Testis (tissue), 5 donors: ENCODE measurements at regions of chr1 and their contacts with region 1.

Region 1: GRCh38 chr1:109548321-109549267 is at the start of gene GNAI3:
- DNase-seq: peak; percentile 98
- H3K4me3 ChIP-seq: peak within 1 kb of the TSS; percentile 75 to 81
- H3K27ac ChIP-seq: peak within 1 kb of the TSS; percentile 84 to 94
- H3K4me1 ChIP-seq: peaks cover 16% of the 10 kb centered on the region
- H3K27me3 ChIP-seq: no peaks in the 10 kb centered on the region
- CTCF ChIP-seq: peak in 1 of 3 experiments; percentile 18
- POLR2A ChIP-seq: peak; percentile 98
- total RNA-seq, gene GNAI3: 5.8 to 5.9 TPM

Region 2: GRCh38 chr1:109624201-109625010 is 75.8 kb after region 1 on chr1:
- intact Hi-C with region 1: loop called (anchors 5 kb)
- DNase-seq: no peak
- H3K4me3 ChIP-seq: no peak overlapping the region
- H3K27ac ChIP-seq: peak overlapping the region in 1 of 2 donors; percentile 41
- H3K4me1 ChIP-seq: peaks cover 31% of the 10 kb centered on the region
- H3K27me3 ChIP-seq: no peaks in the 10 kb centered on the region
- CTCF ChIP-seq: no peak
- POLR2A ChIP-seq: no peak

Region 3: DNA sequence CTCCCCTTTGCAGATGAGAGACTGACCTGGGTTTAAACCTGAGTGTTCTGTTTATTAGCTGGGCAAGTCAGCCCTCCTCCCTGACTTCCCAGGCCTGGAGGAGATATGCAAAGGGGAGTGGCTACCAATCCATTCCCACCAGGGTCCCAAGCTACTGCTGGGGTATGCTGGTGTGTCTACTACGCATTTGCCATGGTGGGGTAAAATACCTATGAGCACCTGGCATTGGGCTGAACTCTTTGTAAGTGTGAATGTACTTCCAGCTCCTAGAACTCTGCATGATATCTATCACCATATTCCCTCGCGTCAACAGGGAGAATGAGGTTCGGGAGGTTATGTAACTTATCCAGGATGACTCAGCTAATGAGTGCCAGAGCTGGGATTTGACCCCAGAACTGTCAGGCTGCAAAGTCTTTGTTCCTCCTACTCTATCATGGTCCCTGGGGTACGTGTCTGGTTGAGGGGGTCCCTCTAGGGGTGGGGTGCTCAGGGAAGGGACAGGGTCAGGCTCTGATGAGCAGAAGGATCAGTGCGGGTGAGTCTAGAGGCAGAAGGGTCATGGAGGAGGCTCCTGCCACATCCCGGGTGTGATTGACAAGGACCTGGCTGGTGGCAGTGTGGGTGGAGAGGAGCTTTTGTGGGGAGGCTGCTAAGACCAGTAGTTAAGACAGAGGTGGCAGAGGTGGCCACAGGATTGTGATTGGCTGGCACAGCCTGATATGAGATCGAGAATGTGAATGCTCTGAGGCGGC is 87.8 kb after region 1 on chr1:
- intact Hi-C with region 1: loop called (anchors 5 kb)
- DNase-seq: no peak
- H3K4me3 ChIP-seq: no peak overlapping the region
- H3K27ac ChIP-seq: no peak overlapping the region
- H3K4me1 ChIP-seq: peaks cover 31% of the 10 kb centered on the region
- H3K27me3 ChIP-seq: no peaks in the 10 kb centered on the region
- CTCF ChIP-seq: no peak
- POLR2A ChIP-seq: no peak

Region 4: GRCh38 chr1:109655601-109656519 is 107.3 kb after region 1 on chr1 and contains the start of gene GSTM4:
- intact Hi-C with region 1: no loop called
- DNase-seq: peak; percentile 93
- H3K4me3 ChIP-seq: peak within 1 kb of the TSS; percentile 66 to 68
- H3K27ac ChIP-seq: peak within 1 kb of the TSS; percentile 81 to 93
- H3K4me1 ChIP-seq: peaks cover 29% of the 10 kb centered on the region
- H3K27me3 ChIP-seq: no peaks in the 10 kb centered on the region
- CTCF ChIP-seq: peak in 1 of 3 experiments; percentile 9
- POLR2A ChIP-seq: no peak
- total RNA-seq, gene GSTM4: 58.6 to 61.8 TPM

Region 5: DNA sequence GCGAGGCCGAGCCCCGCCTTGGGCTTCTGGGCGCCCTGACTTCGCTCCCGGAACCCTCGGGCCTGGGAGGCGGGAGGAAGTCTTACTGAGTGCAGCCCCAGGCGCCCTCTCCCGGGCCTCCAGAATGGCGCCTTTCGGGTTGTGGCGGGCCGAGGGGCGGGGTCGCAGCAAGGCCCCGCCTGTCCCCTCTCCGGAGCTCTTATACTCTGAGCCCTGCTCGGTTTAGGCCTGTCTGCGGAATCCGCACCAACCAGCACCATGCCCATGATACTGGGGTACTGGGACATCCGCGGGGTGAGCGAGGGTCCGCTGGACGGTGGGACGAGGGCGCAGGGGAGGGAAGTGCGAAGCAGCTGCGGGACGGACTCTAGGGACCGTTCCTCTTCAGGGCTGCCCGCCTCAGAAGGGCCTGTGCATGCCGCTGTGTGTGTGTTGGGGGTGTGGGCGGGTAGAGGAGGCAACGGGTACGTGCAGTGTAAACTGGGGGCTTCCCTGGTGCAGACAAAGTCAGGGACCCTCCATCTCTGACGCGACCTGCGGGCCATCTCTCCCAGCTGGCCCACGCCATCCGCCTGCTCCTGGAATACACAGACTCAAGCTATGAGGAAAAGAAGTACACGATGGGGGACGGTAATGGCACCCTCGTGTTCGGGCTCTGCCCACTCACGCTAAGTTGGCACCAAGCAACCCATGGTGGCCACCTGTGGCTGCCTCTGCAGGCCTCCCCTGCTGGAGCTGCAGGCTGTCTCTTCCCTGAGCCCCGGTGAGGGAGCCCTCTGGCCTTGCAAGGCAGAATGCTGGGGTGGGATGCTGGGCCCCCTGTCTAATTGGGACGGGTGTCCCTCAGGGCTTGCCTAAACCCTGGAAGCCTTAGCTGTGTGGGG is 139.3 kb after region 1 on chr1 and contains the start of gene GSTM1:
- intact Hi-C with region 1: no loop called
- DNase-seq: no peak
- H3K4me3 ChIP-seq: no peak within 1 kb of the TSS
- H3K27ac ChIP-seq: no peak within 1 kb of the TSS
- H3K4me1 ChIP-seq: no peaks in the 10 kb centered on the region
- H3K27me3 ChIP-seq: no peaks in the 10 kb centered on the region
- CTCF ChIP-seq: no peak
- POLR2A ChIP-seq: no peak
- total RNA-seq, gene GSTM1: not detected

Region 6: GRCh38 chr1:109773146-109773899 is 224.7 kb after region 1 on chr1:
- intact Hi-C with region 1: loop called (anchors 5 kb)
- DNase-seq: peak; percentile 92
- H3K4me3 ChIP-seq: no peak overlapping the region
- H3K27ac ChIP-seq: no peak overlapping the region
- H3K4me1 ChIP-seq: peaks cover 25% of the 10 kb centered on the region
- H3K27me3 ChIP-seq: no peaks in the 10 kb centered on the region
- CTCF ChIP-seq: peak; percentile 80 to 93 (median 89)
- POLR2A ChIP-seq: no peak